MCF 10A (cell line): ENCODE measurements at regions of chr17 and their contacts with region 1.

Region 1: GRCh38 chr17:74212913-74213791 is at the start of gene TTYH2:
- DNase-seq: peak; percentile 87
- H3K4me3 Mint-ChIP-seq: peak within 1 kb of the TSS; percentile 84
- H3K27ac Mint-ChIP-seq: peak within 1 kb of the TSS; percentile 60
- H3K4me1 Mint-ChIP-seq: peaks cover 22% of the 10 kb centered on the region
- H3K27me3 Mint-ChIP-seq: no peaks in the 10 kb centered on the region
- CTCF ChIP-seq: peak; percentile 18
- total RNA-seq, gene TTYH2: 0.12 and 0.66 TPM in 2 replicates

Region 2: GRCh38 chr17:74280093-74280513 is 67.0 kb after region 1 on chr17:
- CTCF ChIA-PET with region 1: interaction called, 3 read pairs
- POLR2A ChIA-PET with region 1: no interaction called
- intact Hi-C with region 1: loop called (anchors 5 kb)
- DNase-seq: no peak
- H3K4me3 Mint-ChIP-seq: no peak overlapping the region
- H3K27ac Mint-ChIP-seq: no peak overlapping the region
- H3K4me1 Mint-ChIP-seq: peaks cover 7% of the 10 kb centered on the region
- H3K27me3 Mint-ChIP-seq: peaks cover 18% of the 10 kb centered on the region
- CTCF ChIP-seq: no peak

Region 3: DNA sequence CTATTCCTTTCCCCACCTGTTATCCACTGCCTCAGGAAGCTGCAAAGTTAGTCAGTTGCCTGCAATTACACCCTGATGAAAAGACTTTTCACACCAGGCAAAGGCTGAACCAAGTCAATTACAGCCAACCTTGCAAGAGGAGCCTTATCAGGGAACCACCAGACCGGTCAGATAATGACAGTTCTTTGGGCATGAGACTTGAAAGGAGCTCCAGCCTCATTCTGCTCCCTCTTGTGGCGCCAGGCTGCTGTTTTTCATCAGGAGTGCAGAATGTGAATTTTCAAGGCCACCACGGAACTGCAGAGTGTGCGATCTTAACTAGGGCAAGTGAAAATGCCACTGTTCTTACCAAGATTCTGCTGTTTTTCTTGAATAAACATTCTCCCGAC is 83.4 kb after region 1 on chr17:
- CTCF ChIA-PET with region 1: interaction called, 7 read pairs
- POLR2A ChIA-PET with region 1: interaction called, 3 read pairs
- intact Hi-C with region 1: loop called (anchors 1 kb)
- DNase-seq: peak; percentile 29
- H3K4me3 Mint-ChIP-seq: no peak overlapping the region
- H3K27ac Mint-ChIP-seq: no peak overlapping the region
- H3K4me1 Mint-ChIP-seq: peaks cover 6% of the 10 kb centered on the region
- H3K27me3 Mint-ChIP-seq: peaks cover 21% of the 10 kb centered on the region
- CTCF ChIP-seq: peak; percentile 26

Region 4: GRCh38 chr17:74361230-74362068 is 148.3 kb after region 1 on chr17 and contains the start of gene BTBD17:
- CTCF ChIA-PET with region 1: no interaction called
- POLR2A ChIA-PET with region 1: interaction called, 3 read pairs
- intact Hi-C with region 1: loop called (anchors 2 kb)
- DNase-seq: peak; percentile 42
- H3K4me3 Mint-ChIP-seq: no peak within 1 kb of the TSS
- H3K27ac Mint-ChIP-seq: no peak within 1 kb of the TSS
- H3K4me1 Mint-ChIP-seq: no peaks in the 10 kb centered on the region
- H3K27me3 Mint-ChIP-seq: peaks cover 43% of the 10 kb centered on the region
- CTCF ChIP-seq: peak; percentile 52
- total RNA-seq, gene BTBD17: not detected in 2 replicates